PC-3 (cell line): ENCODE measurements at regions of chr13 and their contacts with region 1.

Region 1: DNA sequence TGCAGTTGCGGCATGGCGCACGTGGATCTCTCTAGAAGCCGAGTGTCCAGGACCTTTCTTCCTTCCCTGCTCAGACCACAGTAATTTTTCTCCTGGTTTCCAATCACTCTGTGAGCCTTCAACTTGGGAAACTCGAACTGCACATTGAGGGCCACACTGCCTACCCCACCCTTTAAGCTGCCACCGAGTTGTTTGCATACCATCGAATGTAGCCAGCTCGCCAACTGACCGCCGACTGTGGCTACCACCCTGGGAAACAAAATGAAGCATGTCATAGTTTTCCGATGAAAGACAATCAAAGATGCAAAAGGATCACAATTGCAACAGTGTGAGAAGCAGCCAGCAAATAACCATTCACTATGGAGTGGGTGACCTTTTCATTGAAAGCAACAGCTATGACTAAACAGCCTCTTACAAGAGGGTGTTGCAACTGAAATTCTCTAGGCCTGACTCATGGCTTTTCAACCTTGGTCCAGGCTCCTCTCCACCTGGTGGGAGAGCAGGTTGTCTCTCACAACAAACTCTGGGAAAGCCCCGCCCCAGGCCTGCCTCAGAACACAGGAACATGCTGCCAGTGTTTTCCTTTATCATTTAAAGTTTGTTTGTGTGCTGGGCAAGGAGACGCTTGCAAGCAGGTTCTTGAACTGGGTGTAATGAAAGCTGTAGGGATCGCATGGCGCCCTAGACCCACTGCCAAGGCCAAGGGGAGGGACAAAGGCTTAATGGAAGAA is 141.7 kb upstream of the SERP2 start:
- DNase-seq: peak; percentile 97
- ATAC-seq: peak; percentile 84
- H3K4me3 ChIP-seq: no peak overlapping the region
- H3K27ac ChIP-seq: peak overlapping the region; percentile 100
- H3K4me1 ChIP-seq: peaks cover 42% of the 10 kb centered on the region
- H3K27me3 ChIP-seq: no peaks in the 10 kb centered on the region
- CTCF ChIP-seq: no peak

Region 2: GRCh38 chr13:43874504-43875092 is 357.4 kb before region 1 on chr13:
- CTCF ChIA-PET with region 1: no interaction called
- POLR2A ChIA-PET with region 1: no interaction called
- intact Hi-C with region 1: no loop called
- DNase-seq: peak; percentile 45
- ATAC-seq: no peak
- H3K4me3 ChIP-seq: no peak overlapping the region
- H3K27ac ChIP-seq: no peak overlapping the region
- H3K4me1 ChIP-seq: peaks cover 40% of the 10 kb centered on the region
- H3K27me3 ChIP-seq: no peaks in the 10 kb centered on the region
- CTCF ChIP-seq: peak; percentile 60

Region 3: DNA sequence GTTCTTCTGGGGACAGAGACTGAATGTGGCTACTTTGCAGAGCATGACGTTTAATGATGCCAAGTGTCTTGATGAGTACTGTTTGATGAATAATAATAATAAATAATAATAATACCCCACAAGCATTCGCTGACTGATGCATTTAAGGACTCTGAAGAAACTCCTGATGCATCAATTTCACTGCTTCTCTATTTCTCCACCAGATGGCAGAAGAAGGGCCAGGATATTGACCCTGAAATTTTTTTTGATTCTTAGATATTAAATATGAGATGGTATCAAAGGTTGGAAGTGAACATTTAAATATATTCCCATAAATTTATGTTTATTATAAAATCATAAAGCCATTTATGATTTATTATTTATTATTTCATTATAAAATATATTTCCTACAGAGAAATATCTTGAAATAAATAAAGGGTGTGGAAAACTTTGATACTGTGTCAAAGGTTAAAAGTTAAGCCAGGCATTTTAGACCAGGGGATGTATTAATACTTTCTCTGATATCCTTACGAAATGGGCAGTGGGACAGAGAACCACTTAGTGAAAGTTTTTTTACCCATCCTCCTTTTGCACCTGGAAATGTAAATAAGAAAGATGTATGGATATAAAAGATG is 181.4 kb before region 1 on chr13:
- CTCF ChIA-PET with region 1: no interaction called
- POLR2A ChIA-PET with region 1: no interaction called
- intact Hi-C with region 1: loop called (anchors 5 kb)
- DNase-seq: peak; percentile 62
- ATAC-seq: no peak
- H3K4me3 ChIP-seq: no peak overlapping the region
- H3K27ac ChIP-seq: peak overlapping the region; percentile 67
- H3K4me1 ChIP-seq: peaks cover 26% of the 10 kb centered on the region
- H3K27me3 ChIP-seq: no peaks in the 10 kb centered on the region
- CTCF ChIP-seq: peak; percentile 61

Region 4: GRCh38 chr13:44075113-44075512 is 156.8 kb before region 1 on chr13:
- CTCF ChIA-PET with region 1: no interaction called
- POLR2A ChIA-PET with region 1: no interaction called
- intact Hi-C with region 1: no loop called
- DNase-seq: no peak
- ATAC-seq: no peak
- H3K4me3 ChIP-seq: no peak overlapping the region
- H3K27ac ChIP-seq: no peak overlapping the region
- H3K4me1 ChIP-seq: no peaks in the 10 kb centered on the region
- H3K27me3 ChIP-seq: no peaks in the 10 kb centered on the region
- CTCF ChIP-seq: no peak

Region 5: GRCh38 chr13:44141725-44142539 is 90.0 kb before region 1 on chr13:
- CTCF ChIA-PET with region 1: no interaction called
- POLR2A ChIA-PET with region 1: no interaction called
- intact Hi-C with region 1: loop called (anchors 2 kb)
- DNase-seq: peak; percentile 93
- ATAC-seq: peak; percentile 95
- H3K4me3 ChIP-seq: peak overlapping the region; percentile 75
- H3K27ac ChIP-seq: peak overlapping the region; percentile 84
- H3K4me1 ChIP-seq: peaks cover 29% of the 10 kb centered on the region
- H3K27me3 ChIP-seq: no peaks in the 10 kb centered on the region
- CTCF ChIP-seq: no peak

Region 6: DNA sequence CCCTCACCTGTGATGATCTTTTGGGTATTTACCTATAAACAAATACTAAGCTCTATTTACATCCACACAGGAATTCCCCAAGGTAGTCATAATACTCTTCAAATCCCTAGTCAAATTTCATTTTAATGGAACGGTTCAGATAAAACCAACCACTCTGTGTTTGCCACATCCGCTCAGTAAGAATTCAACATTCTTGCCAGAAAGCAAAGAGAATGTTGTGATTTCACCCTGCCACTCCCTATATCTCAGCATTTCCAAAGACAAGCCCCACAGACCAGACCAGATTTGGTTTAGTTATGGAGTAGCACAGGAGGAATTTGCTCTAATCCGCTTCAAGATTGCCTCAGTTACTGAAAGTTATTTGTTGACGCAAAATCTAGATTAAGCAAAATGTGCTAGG is 36.0 kb after region 1 on chr13:
- CTCF ChIA-PET with region 1: no interaction called
- POLR2A ChIA-PET with region 1: interaction called, 3 read pairs
- intact Hi-C with region 1: loop called (anchors 1 kb)
- DNase-seq: peak; percentile 91
- ATAC-seq: peak; percentile 83
- H3K4me3 ChIP-seq: no peak overlapping the region
- H3K27ac ChIP-seq: peak overlapping the region; percentile 95
- H3K4me1 ChIP-seq: peaks cover 43% of the 10 kb centered on the region
- H3K27me3 ChIP-seq: no peaks in the 10 kb centered on the region
- CTCF ChIP-seq: no peak

Region 7: GRCh38 chr13:44364348-44365049 is 132.5 kb after region 1 on chr13:
- CTCF ChIA-PET with region 1: no interaction called
- POLR2A ChIA-PET with region 1: no interaction called
- intact Hi-C with region 1: loop called (anchors 2 kb)
- DNase-seq: peak; percentile 91
- ATAC-seq: peak; percentile 74
- H3K4me3 ChIP-seq: no peak overlapping the region
- H3K27ac ChIP-seq: peak overlapping the region; percentile 95
- H3K4me1 ChIP-seq: peaks cover 70% of the 10 kb centered on the region
- H3K27me3 ChIP-seq: no peaks in the 10 kb centered on the region
- CTCF ChIP-seq: no peak

Region 8: GRCh38 chr13:45301243-45301642 is 1069.3 kb after region 1 on chr13:
- CTCF ChIA-PET with region 1: no interaction called
- POLR2A ChIA-PET with region 1: interaction called, 21 read pairs
- intact Hi-C with region 1: no loop called
- DNase-seq: no peak
- ATAC-seq: peak; percentile 30; the same call in 1 of the 2 replicates
- H3K4me3 ChIP-seq: no peak overlapping the region
- H3K27ac ChIP-seq: no peak overlapping the region
- H3K4me1 ChIP-seq: no peaks in the 10 kb centered on the region
- H3K27me3 ChIP-seq: no peaks in the 10 kb centered on the region
- CTCF ChIP-seq: no peak